ENCODE measurements at regions of chr20 and their contacts with region 1.

Region 1: DNA sequence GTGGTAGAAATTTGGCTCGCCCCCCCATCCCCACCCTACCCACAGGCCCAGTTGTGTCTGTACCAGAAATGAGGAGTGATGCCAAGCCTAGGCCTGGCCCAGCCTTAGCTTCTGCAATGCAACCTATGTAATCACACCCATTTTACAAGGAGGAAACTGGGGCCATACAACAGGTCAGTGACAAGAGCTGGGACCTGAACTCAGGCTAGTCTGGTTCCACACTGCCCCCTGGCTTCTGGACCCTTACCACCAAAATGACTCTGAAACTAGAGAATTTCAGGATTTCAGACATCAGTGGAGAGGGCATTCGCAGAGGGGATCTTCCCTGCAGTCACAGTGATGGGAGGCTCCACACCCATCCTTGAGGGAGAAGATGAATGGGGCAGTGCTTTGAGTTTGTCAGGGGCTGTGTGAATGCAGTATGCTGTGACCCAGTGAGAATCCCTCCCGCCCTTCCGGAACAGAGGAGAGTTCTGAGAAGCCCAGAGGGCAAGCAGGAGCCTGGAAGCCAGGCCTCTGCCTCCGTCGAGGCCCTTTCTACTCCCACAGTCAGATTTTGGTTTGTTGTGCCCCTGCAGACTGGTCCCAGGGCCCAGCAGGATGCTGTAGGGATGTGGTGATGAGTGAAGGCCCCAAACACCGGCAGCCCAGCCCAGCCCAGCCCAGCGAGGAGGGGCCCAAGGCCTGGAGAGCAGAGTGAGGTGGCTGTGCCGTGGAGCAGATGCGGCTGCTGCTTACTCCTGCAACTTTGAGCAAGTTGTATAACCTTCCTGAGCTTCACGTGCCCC is 48.1 kb upstream of the MYL9 start:
- DNase-seq: peak; percentile 55
- H3K4me3 Mint-ChIP-seq: no peak overlapping the region
- H3K27ac Mint-ChIP-seq: no peak overlapping the region
- H3K4me1 Mint-ChIP-seq: peaks cover 35% of the 10 kb centered on the region
- H3K27me3 Mint-ChIP-seq: no peaks in the 10 kb centered on the region

Region 2: DNA sequence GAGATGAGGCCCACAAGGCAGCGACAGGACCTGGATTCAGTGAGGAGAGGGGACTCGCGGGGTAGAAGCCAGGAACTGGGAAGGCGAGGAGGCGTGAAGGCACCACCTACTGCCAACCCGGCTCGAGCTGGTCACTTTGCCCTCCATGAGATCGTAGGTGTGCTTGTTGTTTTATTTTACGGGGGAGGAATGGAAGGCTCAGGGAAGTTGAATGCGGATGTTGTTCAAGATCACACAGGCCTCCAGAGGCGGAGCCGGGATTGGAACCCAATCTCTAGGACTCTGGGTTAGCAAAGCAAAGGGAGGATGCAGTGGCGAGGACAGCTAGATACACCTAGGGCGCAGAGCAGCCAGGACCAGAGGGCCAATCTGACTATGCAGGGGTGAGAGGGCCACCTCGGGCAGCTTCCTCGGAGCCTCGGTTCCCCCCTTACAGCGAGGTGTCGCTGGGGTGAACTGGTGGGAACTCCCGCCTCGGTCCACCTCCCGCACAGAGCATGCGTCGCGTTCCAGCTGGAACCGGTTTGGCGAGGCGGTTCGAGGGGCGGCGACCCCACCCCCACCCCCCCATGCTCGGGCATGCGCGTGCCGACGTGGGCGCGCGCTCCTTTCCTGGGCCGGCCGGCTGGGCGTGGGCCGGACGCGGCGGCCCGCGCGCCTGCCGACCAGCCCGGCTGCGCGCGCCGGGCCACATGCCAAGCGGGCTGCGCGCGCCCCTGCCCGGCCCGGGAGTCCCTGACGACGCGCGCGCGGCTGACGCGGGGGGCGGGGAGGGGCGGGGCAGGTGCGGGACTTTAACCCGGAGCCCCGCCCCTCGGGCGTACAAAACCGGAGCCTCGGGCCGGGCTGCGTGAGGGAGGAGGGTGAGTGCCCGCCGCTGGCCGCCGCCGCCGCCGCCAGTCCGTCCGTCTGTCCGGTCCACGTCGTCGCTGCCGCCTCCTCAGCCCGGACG is 32.3 kb before region 1 on chr20:
- CTCF ChIA-PET with region 1: interaction called, 5 read pairs
- POLR2A ChIA-PET with region 1: interaction called, 14 read pairs
- intact Hi-C with region 1: loop called (anchors 2 kb)
- DNase-seq: peak; percentile 91
- H3K4me3 Mint-ChIP-seq: peak overlapping the region; percentile 65
- H3K27ac Mint-ChIP-seq: peak overlapping the region; percentile 83
- H3K4me1 Mint-ChIP-seq: peaks cover 46% of the 10 kb centered on the region
- H3K27me3 Mint-ChIP-seq: no peaks in the 10 kb centered on the region

Region 3: GRCh38 chr20:36472637-36473081 is 20.5 kb before region 1 on chr20:
- CTCF ChIA-PET with region 1: interaction called, 10 read pairs
- POLR2A ChIA-PET with region 1: interaction called, 14 read pairs
- intact Hi-C with region 1: no loop called
- DNase-seq: peak; percentile 58
- H3K4me3 Mint-ChIP-seq: peak overlapping the region; percentile 43
- H3K27ac Mint-ChIP-seq: peak overlapping the region; percentile 74
- H3K4me1 Mint-ChIP-seq: peaks cover 32% of the 10 kb centered on the region
- H3K27me3 Mint-ChIP-seq: no peaks in the 10 kb centered on the region

Measured in activated CD4-positive, alpha-beta memory T cell treated with anti-CD3 and anti-CD28 coated beads for 36 hours (primary cell).